Right cardiac atrium (tissue), 5 donors: ENCODE measurements at regions of chr21 and their contacts with region 1.

Region 1: DNA sequence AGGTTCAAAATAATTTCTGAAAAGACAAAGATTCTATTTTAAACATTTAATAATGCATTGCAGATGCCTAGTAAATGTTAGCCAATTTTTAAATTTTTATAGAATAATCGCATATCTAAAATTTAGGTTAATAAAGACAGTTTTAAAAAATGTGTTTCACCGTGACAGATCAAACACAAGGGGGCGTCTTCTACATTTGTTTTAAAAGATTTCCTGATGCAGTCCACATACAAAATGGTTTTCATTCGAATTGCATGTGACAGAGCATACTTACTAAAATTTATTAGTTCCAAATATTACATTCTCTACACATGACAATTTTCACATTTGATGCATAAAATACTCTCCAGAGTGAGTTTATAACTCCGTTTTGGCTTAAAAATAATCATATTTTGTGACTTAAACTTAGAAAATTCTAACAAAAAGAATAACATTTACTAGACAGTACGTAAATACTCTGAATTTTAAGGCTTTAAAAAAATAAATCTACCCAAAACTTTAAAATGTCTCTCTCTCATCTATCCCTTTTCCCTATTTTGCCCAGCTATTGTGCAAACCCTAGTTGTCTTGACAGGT is 75.5 kb downstream of the ADAMTS1 start:
- DNase-seq: no peak
- ATAC-seq: no peak
- H3K4me3 ChIP-seq: no peak overlapping the region
- H3K27ac ChIP-seq: no peak overlapping the region
- H3K4me1 ChIP-seq: no peaks in the 10 kb centered on the region
- H3K27me3 ChIP-seq: no peaks in the 10 kb centered on the region

Region 2: GRCh38 chr21:26698416-26698815 is 71.3 kb before region 1 on chr21:
- intact Hi-C with region 1: no loop called
- DNase-seq: no peak
- ATAC-seq: no peak
- H3K4me3 ChIP-seq: no peak overlapping the region
- H3K27ac ChIP-seq: no peak overlapping the region
- H3K4me1 ChIP-seq: no peaks in the 10 kb centered on the region
- H3K27me3 ChIP-seq: no peaks in the 10 kb centered on the region

Region 3: DNA sequence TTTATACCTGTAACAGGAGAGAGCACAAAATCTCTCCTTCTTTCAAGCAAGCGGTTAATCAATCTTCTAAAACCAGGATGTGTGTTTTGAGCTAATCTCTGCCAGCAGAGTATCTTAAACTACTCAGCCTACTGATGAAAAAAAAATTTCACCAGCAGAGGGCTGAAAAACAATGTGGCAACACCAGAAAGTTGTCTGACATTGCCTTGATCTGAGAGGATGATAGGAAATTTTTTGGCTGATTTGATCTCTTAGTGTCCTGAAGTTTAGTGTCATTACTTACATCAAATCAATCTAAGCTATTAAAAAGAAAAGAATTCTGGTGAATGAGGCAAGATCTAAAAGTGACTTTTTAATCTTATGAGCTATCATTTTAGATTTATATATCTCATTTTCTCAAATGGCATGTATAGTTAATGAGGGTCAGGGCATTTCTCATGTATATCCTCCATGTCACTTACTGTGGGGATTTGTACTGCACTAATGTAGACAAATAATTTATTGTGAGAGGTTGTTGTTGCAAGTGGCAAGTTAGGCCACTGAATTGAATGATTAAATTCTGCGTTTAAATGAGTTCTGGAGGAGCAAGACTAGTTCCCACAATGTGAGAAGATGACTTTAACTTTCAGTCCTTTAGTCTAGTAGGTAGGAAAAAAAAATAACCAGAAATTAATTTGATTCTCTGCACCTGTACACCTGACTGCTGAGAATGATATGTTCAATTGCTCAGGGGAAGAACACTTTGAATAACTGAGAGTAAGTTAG is 64.7 kb after region 1 on chr21:
- intact Hi-C with region 1: loop called in 2 of 4 experiments (anchors 5 to 10 kb)
- DNase-seq: no peak
- ATAC-seq: peak; percentile 7 to 25
- H3K4me3 ChIP-seq: no peak overlapping the region
- H3K27ac ChIP-seq: no peak overlapping the region
- H3K4me1 ChIP-seq: no peaks in the 10 kb centered on the region
- H3K27me3 ChIP-seq: no peaks in the 10 kb centered on the region

Region 4: DNA sequence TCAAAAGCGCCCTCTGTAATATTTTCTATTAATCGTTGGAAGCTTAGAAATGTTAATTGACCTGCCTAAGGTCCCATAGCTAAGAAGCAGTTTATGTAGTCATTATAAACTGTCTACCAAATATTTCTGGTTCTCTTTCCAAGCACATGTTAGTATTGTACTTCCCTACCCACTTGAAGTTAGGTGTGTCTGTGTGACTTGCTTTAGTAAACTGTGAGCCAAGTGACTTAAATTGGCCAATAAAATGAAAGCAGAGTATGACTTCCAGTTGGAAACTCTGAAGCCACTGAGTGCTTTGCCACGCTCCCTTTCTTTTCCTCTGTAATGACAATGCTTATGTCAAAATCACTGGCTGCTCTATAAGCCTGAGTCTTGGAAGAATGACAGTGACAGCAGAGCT is 96.2 kb after region 1 on chr21:
- intact Hi-C with region 1: no loop called
- DNase-seq: no peak
- ATAC-seq: no peak
- H3K4me3 ChIP-seq: no peak overlapping the region
- H3K27ac ChIP-seq: no peak overlapping the region
- H3K4me1 ChIP-seq: no peaks in the 10 kb centered on the region
- H3K27me3 ChIP-seq: no peaks in the 10 kb centered on the region